WTC11 (cell line): ENCODE measurements at regions of chr7 and their contacts with region 1.

Region 1: DNA sequence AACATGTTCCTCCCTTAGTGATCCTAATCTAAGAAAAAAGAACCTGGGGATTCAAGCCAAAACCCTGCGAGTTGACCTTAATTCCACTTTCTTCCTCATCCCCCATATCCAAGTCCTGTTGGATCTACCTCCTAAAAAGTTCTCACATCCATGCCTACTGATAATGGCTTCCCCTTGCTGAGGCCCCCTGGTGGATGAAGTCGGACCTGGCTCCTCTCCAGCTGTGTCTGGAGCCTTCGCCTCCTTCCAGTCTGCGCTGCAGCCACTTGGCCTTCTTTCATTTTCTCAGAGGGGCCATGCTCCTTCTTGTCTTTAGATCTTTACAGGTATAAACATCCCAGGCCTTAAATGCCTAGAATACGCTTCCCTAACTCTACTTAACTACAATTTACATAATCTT is 8.1 kb downstream of the PDE1C start:
- DNase-seq: peak; percentile 85
- ATAC-seq: peak; percentile 90
- H3K4me3 Mint-ChIP-seq: no peak overlapping the region
- H3K27ac Mint-ChIP-seq: no peak overlapping the region
- H3K4me1 Mint-ChIP-seq: peaks cover 43% of the 10 kb centered on the region
- H3K27me3 Mint-ChIP-seq: peaks cover 83% of the 10 kb centered on the region
- CTCF ChIP-seq: peak; percentile 62; the same call in 1 of the 2 replicates

Region 2: GRCh38 chr7:31857172-31857571 is 205.0 kb before region 1 on chr7:
- CTCF ChIA-PET with region 1: no interaction called
- POLR2A ChIA-PET with region 1: no interaction called
- DNase-seq: no peak
- ATAC-seq: no peak
- H3K4me3 Mint-ChIP-seq: no peak overlapping the region
- H3K27ac Mint-ChIP-seq: no peak overlapping the region
- H3K4me1 Mint-ChIP-seq: peaks cover 5% of the 10 kb centered on the region
- H3K27me3 Mint-ChIP-seq: peaks cover 63% of the 10 kb centered on the region
- CTCF ChIP-seq: no peak

Region 3: GRCh38 chr7:32051128-32051527 is 11.0 kb before region 1 on chr7:
- CTCF ChIA-PET with region 1: interaction called, 10 read pairs
- POLR2A ChIA-PET with region 1: no interaction called
- DNase-seq: no peak
- ATAC-seq: no peak
- H3K4me3 Mint-ChIP-seq: no peak overlapping the region
- H3K27ac Mint-ChIP-seq: no peak overlapping the region
- H3K4me1 Mint-ChIP-seq: no peaks in the 10 kb centered on the region
- H3K27me3 Mint-ChIP-seq: peaks cover 28% of the 10 kb centered on the region
- CTCF ChIP-seq: no peak

Region 4: DNA sequence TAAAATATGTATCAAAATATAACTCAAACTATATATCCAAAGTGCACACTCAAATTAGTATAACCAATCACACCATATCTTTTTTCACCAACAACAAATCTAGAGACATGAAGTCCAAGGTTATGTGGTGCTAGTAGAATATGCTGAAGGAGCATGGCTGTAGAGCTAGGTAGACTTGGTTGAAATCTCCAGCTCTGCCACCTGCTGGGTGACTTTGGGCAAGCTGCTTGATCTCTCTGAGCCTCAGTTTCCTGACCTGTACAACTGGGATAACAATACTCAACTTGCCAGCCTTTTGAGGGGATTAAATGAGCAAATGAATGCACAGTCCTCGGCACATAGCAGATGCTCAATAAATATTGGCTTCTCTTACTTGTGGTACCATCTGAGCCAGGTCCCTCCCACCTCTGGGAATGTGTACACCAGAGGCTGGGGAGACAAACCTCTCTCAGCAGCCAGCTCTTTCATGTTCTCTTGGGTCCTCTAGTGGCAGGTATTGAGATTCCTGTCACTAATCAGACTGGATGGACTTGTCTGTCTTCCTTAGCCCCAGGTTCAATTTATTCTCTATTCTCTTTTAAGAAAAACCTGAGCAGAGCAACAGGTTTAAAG is 102.3 kb after region 1 on chr7:
- CTCF ChIA-PET with region 1: interaction called, 12 read pairs
- POLR2A ChIA-PET with region 1: no interaction called
- DNase-seq: peak; percentile 28
- ATAC-seq: peak; percentile 96
- H3K4me3 Mint-ChIP-seq: no peak overlapping the region
- H3K27ac Mint-ChIP-seq: no peak overlapping the region
- H3K4me1 Mint-ChIP-seq: no peaks in the 10 kb centered on the region
- H3K27me3 Mint-ChIP-seq: peaks cover 23% of the 10 kb centered on the region
- CTCF ChIP-seq: peak; percentile 50

Region 5: DNA sequence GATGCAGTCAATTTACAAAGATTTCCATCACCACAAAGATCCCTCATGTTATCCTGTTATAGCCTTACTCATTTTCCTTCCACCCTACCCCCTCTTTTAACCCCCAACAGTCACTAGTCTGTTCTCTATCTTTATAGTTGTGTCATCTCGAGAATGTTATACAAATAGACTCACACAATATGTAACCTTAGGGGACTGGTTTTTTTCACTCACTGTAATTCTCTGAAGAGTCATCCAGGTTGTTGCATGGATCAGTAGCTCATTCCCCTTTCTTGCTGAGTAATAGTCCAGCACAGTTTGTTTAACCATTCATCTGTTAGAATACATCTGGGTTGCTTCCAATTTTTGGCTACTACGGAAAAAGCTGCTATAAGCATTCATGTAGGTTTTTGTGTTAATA is 129.2 kb after region 1 on chr7:
- CTCF ChIA-PET with region 1: no interaction called
- POLR2A ChIA-PET with region 1: no interaction called
- DNase-seq: no peak
- ATAC-seq: no peak
- H3K4me3 Mint-ChIP-seq: no peak overlapping the region
- H3K27ac Mint-ChIP-seq: no peak overlapping the region
- H3K4me1 Mint-ChIP-seq: no peaks in the 10 kb centered on the region
- H3K27me3 Mint-ChIP-seq: peaks cover 24% of the 10 kb centered on the region
- CTCF ChIP-seq: no peak

Region 6: DNA sequence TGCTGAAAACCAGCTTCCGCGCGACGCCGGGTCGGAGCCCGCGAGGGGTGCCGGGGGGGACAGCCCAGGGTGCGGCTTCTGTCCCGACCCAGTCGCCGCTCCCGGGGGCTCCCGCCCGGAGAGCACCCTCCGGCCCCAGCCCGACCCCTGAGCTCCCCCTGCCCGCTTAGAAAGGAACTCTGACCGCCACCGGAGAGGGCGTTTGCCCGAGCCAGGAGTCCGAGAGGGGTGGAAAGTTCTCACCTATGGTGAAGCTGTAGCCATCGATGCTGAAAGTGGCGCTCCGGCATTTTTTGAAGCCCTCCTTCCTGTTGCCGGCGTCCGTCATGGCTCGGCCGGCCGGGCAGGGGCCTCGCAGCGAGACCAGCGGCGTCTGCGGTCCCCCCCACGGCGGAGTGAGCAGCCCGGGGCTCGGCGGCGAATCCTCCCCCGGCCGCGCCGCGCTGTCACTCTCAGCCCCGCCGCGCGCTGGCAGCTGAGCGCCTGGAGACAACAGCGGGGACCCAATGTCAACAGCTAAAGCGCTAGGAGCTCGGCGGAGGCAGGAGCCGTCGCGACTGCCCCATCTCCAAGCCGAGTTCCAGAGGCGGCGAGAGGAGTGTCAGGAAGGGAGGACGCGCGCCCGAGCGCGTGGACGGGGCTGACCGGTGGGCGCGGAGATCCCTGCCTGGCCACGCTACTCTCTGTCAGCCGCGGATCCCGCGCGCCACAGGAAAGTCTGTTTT is 236.4 kb after region 1 on chr7:
- CTCF ChIA-PET with region 1: no interaction called
- POLR2A ChIA-PET with region 1: no interaction called
- DNase-seq: peak; percentile 44
- ATAC-seq: peak; percentile 56
- H3K4me3 Mint-ChIP-seq: peak overlapping the region; percentile 91
- H3K27ac Mint-ChIP-seq: no peak overlapping the region
- H3K4me1 Mint-ChIP-seq: peaks cover 34% of the 10 kb centered on the region
- H3K27me3 Mint-ChIP-seq: peaks cover 67% of the 10 kb centered on the region
- CTCF ChIP-seq: no peak